Adrenal gland (tissue), 19 donors: ENCODE measurements at regions of chr1 and their contacts with region 1.

Region 1: DNA sequence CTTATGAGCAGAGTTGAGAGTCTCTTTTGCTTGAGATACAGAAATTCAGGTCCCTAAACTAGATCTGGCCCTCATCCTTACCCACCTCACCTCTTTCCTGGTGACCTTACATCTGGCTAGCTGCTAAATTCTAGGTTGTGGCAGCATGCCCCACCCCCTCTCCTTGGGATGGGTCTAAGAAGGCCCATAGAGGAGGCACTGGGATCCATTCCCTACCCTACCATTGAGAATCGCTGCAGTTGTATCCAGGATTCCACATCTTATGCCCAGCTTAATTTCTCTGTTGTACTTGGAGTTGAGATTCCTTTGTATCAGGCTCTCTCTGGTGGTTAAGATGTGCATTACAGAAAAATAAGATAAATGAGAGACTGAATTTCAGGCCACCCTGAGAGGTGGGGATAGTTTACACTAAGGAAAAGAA is 9.5 kb upstream of the TMEM39B start:
- DNase-seq: peak in 1 of 7 donors; percentile 49
- H3K4me3 ChIP-seq: no peak overlapping the region
- H3K27ac ChIP-seq: peak overlapping the region in 2 of 5 donors; percentile 52 to 61
- H3K4me1 ChIP-seq: peaks cover 4 to 23% of the 10 kb centered on the region in 2 donors
- H3K27me3 ChIP-seq: no peaks in the 10 kb centered on the region
- CTCF ChIP-seq: peak; percentile 40 to 78 (median 68)
- POLR2A ChIP-seq: no peak

Region 2: GRCh38 chr1:31658721-31659120 is 404.6 kb before region 1 on chr1:
- intact Hi-C with region 1: loop called in 1 of 2 experiments (anchors 10 kb)
- DNase-seq: no peak
- H3K4me3 ChIP-seq: no peak overlapping the region
- H3K27ac ChIP-seq: no peak overlapping the region
- H3K4me1 ChIP-seq: no peaks in the 10 kb centered on the region
- H3K27me3 ChIP-seq: no peaks in the 10 kb centered on the region
- CTCF ChIP-seq: no peak
- POLR2A ChIP-seq: no peak

Region 3: GRCh38 chr1:31977385-31978131 is 85.7 kb before region 1 on chr1:
- intact Hi-C with region 1: no loop called
- DNase-seq: no peak
- H3K4me3 ChIP-seq: no peak overlapping the region
- H3K27ac ChIP-seq: no peak overlapping the region
- H3K4me1 ChIP-seq: no peaks in the 10 kb centered on the region
- H3K27me3 ChIP-seq: no peaks in the 10 kb centered on the region
- CTCF ChIP-seq: peak in 2 of 6 experiments; percentile 16 to 24
- POLR2A ChIP-seq: no peak